Left ventricle myocardium superior (tissue), 1 donor: ENCODE measurements at regions of chr11 and their contacts with region 1.

Region 1: GRCh38 chr11:128279866-128280265 is 307.5 kb downstream of the ETS1 start:
- DNase-seq: no peak
- ATAC-seq: no peak

Region 2: DNA sequence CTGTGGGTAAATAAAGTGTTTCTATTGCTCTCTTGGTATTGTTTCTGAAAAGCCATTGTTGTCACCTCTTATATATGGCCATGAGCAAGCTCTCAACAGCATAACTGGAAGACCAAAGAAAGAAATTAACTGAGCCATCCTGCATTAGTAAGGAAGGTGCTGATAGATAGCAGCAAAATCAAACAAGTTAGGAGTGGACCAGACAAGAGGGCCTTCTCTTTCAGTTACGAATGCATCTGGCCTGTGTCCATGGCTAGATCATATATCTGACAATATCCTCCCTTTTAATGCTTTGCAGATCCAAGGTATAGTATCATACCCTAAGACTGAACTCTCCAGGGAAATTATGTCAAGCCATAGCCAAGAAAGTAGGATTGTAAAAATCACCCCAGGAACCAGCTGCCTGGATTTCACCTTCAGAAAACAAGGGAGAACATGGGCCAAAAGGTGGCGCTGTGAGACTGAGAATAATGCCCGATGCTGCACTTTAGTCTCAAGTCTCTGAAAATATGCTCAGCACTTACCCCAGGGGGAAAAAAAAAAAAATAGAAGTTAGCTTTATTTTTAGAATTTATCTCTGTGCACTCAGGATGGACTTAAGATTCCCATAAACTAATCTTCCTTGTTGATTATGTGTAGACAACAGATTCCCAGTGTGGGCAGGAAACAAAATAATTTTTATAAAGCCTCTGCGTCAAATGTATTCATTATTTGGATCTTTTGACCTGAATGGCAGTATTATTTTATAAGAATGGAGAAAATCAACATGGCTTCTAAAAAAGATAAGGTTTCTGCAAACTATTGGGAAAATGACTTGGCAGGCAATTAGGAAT is 107.6 kb before region 1 on chr11:
- intact Hi-C with region 1: loop called (anchors 10 kb)
- DNase-seq: peak; percentile 81
- ATAC-seq: peak; percentile 77

Region 3: GRCh38 chr11:128831174-128832120 is 551.6 kb after region 1 on chr11:
- intact Hi-C with region 1: loop called (anchors 10 kb)
- DNase-seq: peak; percentile 87
- ATAC-seq: peak; percentile 84